Activated CD4-positive, alpha-beta memory T cell treated with anti-CD3 and anti-CD28 coated beads for 36 hours (primary cell): ENCODE measurements at regions of chr7 and their contacts with region 1.

Region 1: DNA sequence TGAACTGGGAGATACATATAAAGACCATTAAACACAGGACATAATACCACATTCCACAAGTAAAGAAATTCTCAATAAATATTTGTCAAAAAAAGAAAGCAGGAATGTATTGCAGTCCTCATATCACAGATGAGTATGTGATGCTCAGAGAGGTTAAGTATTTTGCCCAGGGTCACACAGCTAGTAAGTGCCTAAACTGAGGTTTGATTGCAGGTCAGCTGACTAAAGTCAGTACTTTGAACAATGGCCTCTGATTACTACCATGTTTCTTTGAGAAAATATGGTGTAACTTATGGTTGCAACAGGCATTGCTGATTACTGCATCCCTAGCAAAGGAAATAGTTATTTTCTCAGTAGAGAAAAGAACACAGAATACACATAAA is 267.1 kb downstream of the ELMO1 start:
- DNase-seq: no peak
- H3K4me3 Mint-ChIP-seq: no peak overlapping the region
- H3K27ac Mint-ChIP-seq: no peak overlapping the region
- H3K4me1 Mint-ChIP-seq: peaks cover 5% of the 10 kb centered on the region
- H3K27me3 Mint-ChIP-seq: no peaks in the 10 kb centered on the region

Region 2: DNA sequence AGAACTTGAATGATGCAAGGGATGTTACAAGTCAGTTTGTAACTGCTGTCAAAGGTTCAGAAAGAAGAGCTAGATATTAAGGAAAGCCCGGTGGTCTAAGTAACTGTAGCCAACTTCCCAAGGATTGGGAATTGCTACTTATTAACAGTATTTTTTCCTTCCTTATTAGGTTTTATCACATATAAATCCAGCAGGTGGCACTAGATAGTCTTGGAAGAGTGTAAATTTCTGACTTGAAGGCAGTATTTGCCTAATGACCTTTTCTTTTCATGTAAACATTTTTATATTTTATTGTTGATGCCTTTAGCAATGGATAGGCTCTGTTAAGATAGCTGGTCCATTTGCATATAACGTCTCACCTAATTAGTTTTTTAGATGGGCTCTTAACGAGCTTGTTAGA is 740.7 kb before region 1 on chr7:
- CTCF ChIA-PET with region 1: interaction called, 15 read pairs
- POLR2A ChIA-PET with region 1: no interaction called
- intact Hi-C with region 1: no loop called
- DNase-seq: no peak
- H3K4me3 Mint-ChIP-seq: no peak overlapping the region
- H3K27ac Mint-ChIP-seq: no peak overlapping the region
- H3K4me1 Mint-ChIP-seq: no peaks in the 10 kb centered on the region
- H3K27me3 Mint-ChIP-seq: no peaks in the 10 kb centered on the region

Region 3: DNA sequence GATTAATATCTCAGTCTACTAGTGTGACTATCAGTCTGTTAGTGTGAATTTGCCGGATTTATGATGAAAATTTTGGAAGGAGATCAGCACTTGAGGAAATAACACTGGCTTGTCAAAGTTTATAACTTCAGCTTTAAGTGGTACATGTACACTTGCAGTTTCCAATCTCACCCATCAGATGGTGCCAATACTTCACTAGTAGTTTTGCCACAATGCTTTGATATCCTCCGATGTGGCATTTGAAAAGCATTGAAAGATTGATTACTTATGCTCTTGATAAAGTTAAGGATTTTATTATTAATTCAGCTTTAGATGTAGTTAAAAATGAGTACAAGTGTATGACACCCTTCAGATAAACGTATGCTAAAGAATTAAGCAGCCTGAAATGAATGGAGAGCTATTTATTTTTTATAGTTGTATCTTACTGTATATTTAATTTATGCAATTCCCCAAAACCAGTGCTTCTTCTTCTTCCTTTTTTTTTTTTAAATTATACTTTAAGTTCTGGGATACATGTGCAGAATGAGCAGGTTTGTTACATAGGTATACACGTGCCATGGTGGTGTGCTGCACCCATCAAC is 693.7 kb before region 1 on chr7:
- CTCF ChIA-PET with region 1: interaction called, 42 read pairs
- POLR2A ChIA-PET with region 1: no interaction called
- intact Hi-C with region 1: loop called (anchors 1 kb)
- DNase-seq: no peak
- H3K4me3 Mint-ChIP-seq: no peak overlapping the region
- H3K27ac Mint-ChIP-seq: no peak overlapping the region
- H3K4me1 Mint-ChIP-seq: peaks cover 2% of the 10 kb centered on the region
- H3K27me3 Mint-ChIP-seq: peaks cover 2% of the 10 kb centered on the region

Region 4: GRCh38 chr7:36967387-36967786 is 214.2 kb before region 1 on chr7:
- CTCF ChIA-PET with region 1: interaction called, 15 read pairs
- POLR2A ChIA-PET with region 1: no interaction called
- intact Hi-C with region 1: no loop called
- DNase-seq: no peak
- H3K4me3 Mint-ChIP-seq: no peak overlapping the region
- H3K27ac Mint-ChIP-seq: no peak overlapping the region
- H3K4me1 Mint-ChIP-seq: peaks cover 53% of the 10 kb centered on the region
- H3K27me3 Mint-ChIP-seq: no peaks in the 10 kb centered on the region

Region 5: GRCh38 chr7:36986429-36987362 is 194.8 kb before region 1 on chr7:
- CTCF ChIA-PET with region 1: interaction called, 112 read pairs
- POLR2A ChIA-PET with region 1: no interaction called
- intact Hi-C with region 1: loop called (anchors 1 kb)
- DNase-seq: peak; percentile 73
- H3K4me3 Mint-ChIP-seq: no peak overlapping the region
- H3K27ac Mint-ChIP-seq: no peak overlapping the region
- H3K4me1 Mint-ChIP-seq: peaks cover 16% of the 10 kb centered on the region
- H3K27me3 Mint-ChIP-seq: no peaks in the 10 kb centered on the region

Region 6: GRCh38 chr7:37031571-37032257 is 149.8 kb before region 1 on chr7:
- CTCF ChIA-PET with region 1: interaction called, 3 read pairs
- POLR2A ChIA-PET with region 1: no interaction called
- intact Hi-C with region 1: loop called (anchors 1 kb)
- DNase-seq: peak; percentile 68
- H3K4me3 Mint-ChIP-seq: no peak overlapping the region
- H3K27ac Mint-ChIP-seq: peak overlapping the region; percentile 49
- H3K4me1 Mint-ChIP-seq: peaks cover 57% of the 10 kb centered on the region
- H3K27me3 Mint-ChIP-seq: no peaks in the 10 kb centered on the region

Region 7: DNA sequence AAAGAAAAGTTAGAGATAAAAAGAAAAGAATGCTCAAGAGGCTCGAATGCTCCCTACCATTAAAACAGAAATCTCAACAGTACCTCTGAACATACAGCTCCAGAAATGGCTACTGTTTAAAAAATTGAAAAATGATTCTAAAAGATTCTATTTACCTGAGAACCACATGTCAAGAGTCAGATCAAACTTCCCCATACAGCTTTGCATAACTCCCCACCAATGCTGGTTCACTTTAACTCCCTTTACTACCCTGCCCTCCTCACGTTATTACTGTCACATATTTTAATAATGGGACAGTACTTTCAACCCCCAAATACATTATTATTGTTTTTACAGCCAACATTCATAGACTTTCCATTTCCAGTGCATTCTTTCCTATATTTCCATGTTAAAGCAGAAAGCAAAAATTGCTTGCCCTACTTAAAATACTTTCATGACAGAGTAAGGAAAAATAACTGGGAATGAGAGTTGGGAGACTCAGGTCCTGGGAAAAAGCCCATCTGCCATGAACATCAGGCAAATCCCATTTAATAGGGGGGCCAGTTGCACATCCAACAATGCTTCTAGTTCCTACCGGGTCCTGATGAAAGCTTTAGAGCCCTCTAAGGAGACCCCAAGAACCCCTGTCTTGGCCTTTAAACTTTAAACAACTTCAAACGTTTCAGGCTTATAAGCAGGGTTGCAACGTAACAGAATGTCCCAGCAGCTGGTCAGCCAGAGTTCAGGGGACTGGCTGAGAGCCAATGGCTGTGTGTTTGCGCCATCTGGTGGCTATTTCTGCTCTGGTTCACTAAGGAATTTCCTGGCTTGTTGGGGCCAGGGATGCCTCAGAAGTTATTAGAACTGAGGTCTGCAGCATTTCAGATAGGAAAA is 19.7 kb after region 1 on chr7:
- CTCF ChIA-PET with region 1: interaction called, 15 read pairs
- POLR2A ChIA-PET with region 1: no interaction called
- intact Hi-C with region 1: no loop called
- DNase-seq: peak; percentile 62
- H3K4me3 Mint-ChIP-seq: no peak overlapping the region
- H3K27ac Mint-ChIP-seq: no peak overlapping the region
- H3K4me1 Mint-ChIP-seq: peaks cover 11% of the 10 kb centered on the region
- H3K27me3 Mint-ChIP-seq: no peaks in the 10 kb centered on the region

Region 8: DNA sequence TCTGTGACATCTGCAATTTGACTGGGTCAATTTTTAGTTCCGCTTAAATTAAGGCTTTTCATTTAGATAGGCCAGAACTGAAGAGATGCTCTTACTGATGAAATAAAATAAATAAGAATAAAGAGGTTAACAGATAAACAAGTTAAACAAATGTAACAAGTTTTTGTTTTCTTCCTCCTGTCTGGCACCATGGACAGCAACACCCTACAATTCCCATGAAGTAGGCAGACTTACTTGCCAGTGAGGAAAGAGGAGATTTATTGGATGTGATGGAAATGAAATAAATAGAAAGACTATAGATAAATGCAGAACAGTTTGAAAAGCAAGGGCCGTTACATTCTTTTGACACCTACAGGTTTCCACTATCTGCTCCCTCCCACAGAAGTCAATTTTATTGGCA is 1331.2 kb after region 1 on chr7:
- CTCF ChIA-PET with region 1: no interaction called
- POLR2A ChIA-PET with region 1: no interaction called
- intact Hi-C with region 1: no loop called
- DNase-seq: no peak
- H3K4me3 Mint-ChIP-seq: no peak overlapping the region
- H3K27ac Mint-ChIP-seq: no peak overlapping the region
- H3K4me1 Mint-ChIP-seq: no peaks in the 10 kb centered on the region
- H3K27me3 Mint-ChIP-seq: no peaks in the 10 kb centered on the region